OCI-LY7 (cell line): ENCODE measurements at regions of chr5 and their contacts with region 1.

Region 1: GRCh38 chr5:148826053-148826738 is at the start of gene ADRB2:
- DNase-seq: peak; percentile 93
- H3K4me3 ChIP-seq: peak within 1 kb of the TSS; percentile 76
- H3K27ac ChIP-seq: peak within 1 kb of the TSS; percentile 35
- H3K4me1 ChIP-seq: peaks cover 51% of the 10 kb centered on the region
- CTCF ChIP-seq: 0 out of 2 replicates have a peak, but pooled peaks have one; percentile 28
- total RNA-seq, gene ADRB2: 14.6 and 16.8 TPM in 2 replicates

Region 2: DNA sequence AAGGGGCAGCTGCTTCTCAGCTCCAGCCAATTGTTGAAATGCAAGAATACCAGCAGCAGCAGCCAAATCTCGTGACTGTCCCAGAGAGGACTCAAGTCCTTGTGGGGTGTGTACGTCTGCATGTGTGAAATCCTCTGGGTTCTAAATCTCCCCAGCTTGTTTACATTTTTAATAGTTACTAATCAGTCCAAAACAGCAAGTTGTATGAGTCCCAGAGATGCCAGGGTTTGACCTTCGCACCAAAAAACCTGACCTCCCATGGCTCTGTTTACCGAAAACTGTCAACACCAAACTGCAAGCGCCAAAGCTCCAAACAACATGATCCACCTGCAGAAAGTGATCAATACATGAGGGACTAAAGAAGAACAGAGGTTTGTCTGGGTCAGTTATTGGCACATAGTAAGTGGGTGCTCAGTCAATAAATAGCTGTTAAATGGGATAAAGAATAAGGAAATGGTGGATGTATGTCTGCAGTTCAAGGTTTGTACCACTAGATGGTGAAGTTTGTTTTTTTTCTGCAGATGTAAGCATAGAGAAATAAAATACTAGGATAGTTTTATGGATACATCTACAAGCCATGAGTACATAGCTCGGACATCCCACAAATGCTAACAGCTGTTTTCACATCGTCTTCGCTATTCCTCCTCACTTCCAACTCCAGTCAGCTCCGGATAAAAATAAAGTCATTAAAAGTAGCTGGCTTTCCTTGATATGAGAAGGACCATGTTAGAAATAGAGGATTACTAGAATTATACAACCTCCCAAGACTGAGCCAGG is 85.0 kb before region 1 on chr5:
- CTCF ChIA-PET with region 1: interaction called, 11 read pairs
- POLR2A ChIA-PET with region 1: interaction called, 5 read pairs
- intact Hi-C with region 1: loop called (anchors 1 kb)
- DNase-seq: peak; percentile 58
- H3K4me3 ChIP-seq: no peak overlapping the region
- H3K27ac ChIP-seq: no peak overlapping the region
- H3K4me1 ChIP-seq: no peaks in the 10 kb centered on the region
- CTCF ChIP-seq: peak; percentile 96

Region 3: GRCh38 chr5:148796931-148797330 is 29.3 kb before region 1 on chr5:
- CTCF ChIA-PET with region 1: no interaction called
- POLR2A ChIA-PET with region 1: interaction called, 10 read pairs
- intact Hi-C with region 1: no loop called
- DNase-seq: no peak
- H3K4me3 ChIP-seq: no peak overlapping the region
- H3K27ac ChIP-seq: no peak overlapping the region
- H3K4me1 ChIP-seq: peaks cover 8% of the 10 kb centered on the region
- CTCF ChIP-seq: no peak

Region 4: GRCh38 chr5:148805326-148806290 is 20.6 kb before region 1 on chr5:
- CTCF ChIA-PET with region 1: interaction called, 3 read pairs
- POLR2A ChIA-PET with region 1: interaction called, 34 read pairs
- intact Hi-C with region 1: loop called (anchors 2 kb)
- DNase-seq: peak; percentile 40
- H3K4me3 ChIP-seq: peak overlapping the region; percentile 12
- H3K27ac ChIP-seq: peak overlapping the region; percentile 93
- H3K4me1 ChIP-seq: peaks cover 52% of the 10 kb centered on the region
- CTCF ChIP-seq: no peak

Region 5: DNA sequence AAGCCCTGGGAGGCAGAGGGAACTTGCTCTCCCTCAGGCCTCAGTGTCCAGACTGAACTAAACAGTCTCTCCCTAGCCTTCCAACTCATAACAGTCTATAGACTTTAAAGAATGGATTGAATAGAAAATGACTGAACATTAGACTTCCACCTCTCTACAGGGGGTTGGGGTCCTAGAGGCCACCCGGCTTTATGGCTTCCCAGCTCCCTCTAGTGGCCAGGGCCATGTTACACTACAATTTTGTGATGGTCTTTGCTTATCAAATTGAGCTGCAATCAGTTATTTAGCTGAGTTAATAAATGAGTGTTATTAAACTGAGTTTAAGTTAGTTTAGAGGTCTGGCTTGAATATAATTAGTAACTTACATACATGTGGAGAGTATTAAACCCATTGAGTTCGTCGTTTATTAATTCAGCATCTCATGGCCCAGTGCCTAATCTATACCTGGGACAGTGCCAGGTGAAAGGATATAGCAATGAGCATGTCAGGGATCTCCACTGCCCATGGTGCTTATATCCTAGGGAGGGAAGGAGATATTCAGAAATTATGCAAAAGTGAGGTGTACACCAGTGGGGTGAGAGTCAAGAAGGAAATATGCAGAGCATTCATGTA is 131.5 kb after region 1 on chr5:
- CTCF ChIA-PET with region 1: no interaction called
- POLR2A ChIA-PET with region 1: interaction called, 5 read pairs
- intact Hi-C with region 1: loop called (anchors 2 kb)
- DNase-seq: peak; percentile 76
- H3K4me3 ChIP-seq: no peak overlapping the region
- H3K27ac ChIP-seq: no peak overlapping the region
- H3K4me1 ChIP-seq: no peaks in the 10 kb centered on the region
- CTCF ChIP-seq: peak; percentile 100